Right lobe of liver (tissue), 6 donors: ENCODE measurements at regions of chr9 and their contacts with region 1.

Region 1: GRCh38 chr9:122350638-122351355 is 20.0 kb upstream of the PTGS1 start:
- DNase-seq: peak; percentile 82 to 83 (median 82)
- ATAC-seq: peak; percentile 87 to 90 (median 88)
- H3K4me3 ChIP-seq: no peak overlapping the region
- H3K27ac ChIP-seq: no peak overlapping the region
- H3K4me1 ChIP-seq: peaks cover 0 to 7% (median 4%) of the 10 kb centered on the region in 4 donors
- H3K27me3 ChIP-seq: no peaks in the 10 kb centered on the region
- CTCF ChIP-seq: peak; percentile 95 to 99 (median 98)
- POLR2A ChIP-seq: no peak

Region 2: DNA sequence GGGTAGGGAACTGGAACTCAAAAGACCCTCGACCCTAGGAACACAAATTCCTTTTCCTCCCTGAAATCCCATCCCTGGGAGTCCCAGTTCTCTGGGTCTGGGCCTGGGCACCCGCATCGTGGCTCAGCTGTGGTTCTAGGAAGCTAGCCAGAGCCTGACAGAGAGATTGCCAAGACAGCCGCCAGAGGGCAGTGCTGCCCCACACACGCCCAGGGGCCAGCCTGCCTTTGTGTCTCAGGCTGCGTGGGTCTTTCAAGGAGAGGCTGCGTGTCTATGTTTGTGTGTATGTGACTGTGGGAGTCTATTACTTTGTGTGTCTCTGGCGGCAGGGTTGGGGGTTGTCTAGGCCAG is 225.7 kb before region 1 on chr9:
- intact Hi-C with region 1: loop called (anchors 5 kb)
- DNase-seq: peak; percentile 77 to 80 (median 79)
- ATAC-seq: peak; percentile 88 to 92 (median 90)
- H3K4me3 ChIP-seq: no peak overlapping the region
- H3K27ac ChIP-seq: no peak overlapping the region
- H3K4me1 ChIP-seq: peaks cover 0 to 4% (median 0%) of the 10 kb centered on the region in 4 donors
- H3K27me3 ChIP-seq: no peaks in the 10 kb centered on the region
- CTCF ChIP-seq: peak; percentile 94 to 97 (median 96)
- POLR2A ChIP-seq: no peak

Region 3: DNA sequence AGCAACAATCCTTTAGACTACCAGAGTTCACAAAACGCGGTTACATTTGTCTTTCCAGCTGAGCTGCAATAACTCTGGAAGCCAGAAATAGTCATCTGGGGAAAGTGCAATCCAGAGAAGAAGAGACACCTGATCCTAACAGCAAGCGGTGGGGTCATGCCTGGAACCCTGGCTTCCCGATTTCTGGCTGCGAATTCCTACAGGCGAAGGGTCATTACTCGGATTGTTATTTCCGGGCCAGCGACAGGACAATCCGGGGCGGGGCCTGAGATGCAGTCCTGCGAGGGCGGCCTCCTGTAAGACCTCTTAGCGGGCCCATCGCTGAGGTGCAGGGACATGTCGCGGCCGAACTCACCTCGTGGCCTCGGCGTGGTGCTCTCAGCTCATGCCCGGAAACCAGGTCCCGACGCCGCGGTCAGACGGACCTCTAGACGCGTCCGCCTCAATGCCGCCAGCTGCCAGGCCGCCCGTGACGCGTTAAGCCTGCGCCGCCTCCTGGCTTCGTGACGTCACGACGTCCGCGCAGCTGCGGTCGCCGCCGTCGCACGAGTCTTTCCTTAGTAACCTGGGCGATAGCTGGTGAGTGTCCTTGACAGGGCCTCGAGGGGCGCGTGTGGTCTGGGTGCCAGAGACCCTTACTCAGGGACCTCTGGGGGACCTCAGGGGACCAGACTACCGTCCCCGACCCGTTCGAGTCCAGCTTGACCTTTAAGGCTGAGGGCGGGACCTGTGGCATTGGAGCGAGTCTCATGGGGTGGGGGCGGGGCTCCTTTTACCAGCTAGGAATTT is 86.2 kb before region 1 on chr9 and contains the starts of genes MRRF and RBM18:
- intact Hi-C with region 1: loop called in 1 of 2 experiments (anchors 10 kb)
- DNase-seq: peak; percentile 92 to 94 (median 93)
- ATAC-seq: peak; percentile 89 to 92 (median 91)
- H3K4me3 ChIP-seq: peak within 1 kb of the TSS; percentile 42 to 84 (median 74)
- H3K27ac ChIP-seq: peak within 1 kb of the TSS; percentile 88 to 95 (median 92)
- H3K4me1 ChIP-seq: peaks cover 0 to 32% (median 9%) of the 10 kb centered on the region in 4 donors
- H3K27me3 ChIP-seq: no peaks in the 10 kb centered on the region
- CTCF ChIP-seq: no peak
- POLR2A ChIP-seq: peak; percentile 57
- total RNA-seq, gene MRRF: 17.4 to 34.0 (median 22.6) TPM
- total RNA-seq, gene RBM18: 3.4 to 9.3 (median 8.7) TPM

Region 4: GRCh38 chr9:122445155-122445749 is 94.5 kb after region 1 on chr9:
- intact Hi-C with region 1: loop called in 1 of 2 experiments (anchors 10 kb)
- DNase-seq: no peak
- ATAC-seq: no peak
- H3K4me3 ChIP-seq: no peak overlapping the region
- H3K27ac ChIP-seq: no peak overlapping the region
- H3K4me1 ChIP-seq: no peaks in the 10 kb centered on the region
- H3K27me3 ChIP-seq: no peaks in the 10 kb centered on the region
- CTCF ChIP-seq: no peak
- POLR2A ChIP-seq: no peak